ENCODE measurements at regions of chr6 and their contacts with region 1.

Region 1: GRCh38 chr6:11025921-11026635 is 18.0 kb downstream of the ELOVL2 start:
- DNase-seq: no peak
- H3K4me3 ChIP-seq: no peak overlapping the region
- H3K27ac ChIP-seq: no peak overlapping the region
- H3K4me1 ChIP-seq: no peaks in the 10 kb centered on the region
- H3K27me3 ChIP-seq: no peaks in the 10 kb centered on the region
- CTCF ChIP-seq: no peak
- POLR2A ChIP-seq: no peak

Region 2: DNA sequence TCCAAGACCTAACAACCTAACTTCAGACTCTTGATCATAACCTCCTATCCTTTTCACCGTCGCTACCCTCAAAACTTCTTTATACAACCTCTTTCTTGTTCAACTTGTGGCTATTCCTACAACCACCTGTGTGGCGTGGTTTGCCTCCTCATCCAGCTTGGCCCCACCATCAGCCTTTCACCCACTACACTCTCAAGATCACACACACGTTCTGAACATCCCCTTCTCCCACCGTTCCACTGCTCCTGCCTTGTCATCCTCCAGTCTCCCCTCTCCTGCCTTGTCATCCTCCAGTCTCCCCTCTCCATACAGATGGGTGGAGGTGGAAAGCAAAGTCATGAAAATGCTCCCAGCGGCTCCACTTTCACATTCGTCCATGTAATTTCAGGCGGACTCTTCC is 201.8 kb before region 1 on chr6:
- intact Hi-C with region 1: no loop called
- DNase-seq: no peak
- H3K4me3 ChIP-seq: no peak overlapping the region
- H3K27ac ChIP-seq: no peak overlapping the region
- H3K4me1 ChIP-seq: no peaks in the 10 kb centered on the region
- H3K27me3 ChIP-seq: no peaks in the 10 kb centered on the region
- CTCF ChIP-seq: no peak
- POLR2A ChIP-seq: no peak

Region 3: GRCh38 chr6:11042750-11043377 is 16.8 kb after region 1 on chr6:
- intact Hi-C with region 1: no loop called
- DNase-seq: no peak
- H3K4me3 ChIP-seq: peak overlapping the region in 1 of 3 donors; percentile 78
- H3K27ac ChIP-seq: no peak overlapping the region
- H3K4me1 ChIP-seq: no peaks in the 10 kb centered on the region
- H3K27me3 ChIP-seq: peaks cover 0 to 38% of the 10 kb centered on the region in 2 donors
- CTCF ChIP-seq: no peak
- POLR2A ChIP-seq: no peak

Region 4: DNA sequence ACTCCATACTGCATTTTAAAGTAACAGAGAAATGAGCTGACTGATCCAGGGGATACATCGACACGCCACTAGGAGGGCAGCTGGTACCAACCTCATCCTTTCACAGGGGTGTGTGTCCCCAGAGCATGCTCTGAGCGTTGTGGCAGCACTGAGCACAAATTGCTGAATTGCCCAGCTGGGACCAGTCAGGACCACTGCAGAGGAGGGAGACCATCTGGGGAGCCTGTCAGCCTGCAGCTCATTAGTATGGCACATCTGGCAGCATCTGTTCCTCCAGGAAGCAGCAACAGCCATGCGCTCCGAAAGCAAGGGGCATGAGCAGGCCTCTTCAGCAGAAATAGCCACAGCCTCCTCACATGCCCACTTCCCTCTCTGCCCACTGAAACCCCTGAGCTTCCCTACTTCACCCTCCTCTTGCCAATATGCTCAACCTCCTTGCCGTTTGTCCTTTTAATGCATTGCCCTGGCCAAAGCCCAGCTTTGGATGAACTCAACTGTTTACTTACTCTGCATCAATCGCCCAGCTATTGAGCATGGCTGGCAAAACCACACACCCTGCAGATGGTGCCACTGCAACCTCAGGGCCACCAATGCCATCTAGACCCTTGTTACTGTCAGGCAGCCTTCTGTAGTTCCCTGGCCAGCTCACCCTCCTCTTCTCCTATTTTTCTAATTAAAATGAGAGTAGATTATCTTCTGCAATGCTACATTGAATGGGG is 284.0 kb after region 1 on chr6:
- intact Hi-C with region 1: loop called (anchors 5 kb)
- DNase-seq: no peak
- H3K4me3 ChIP-seq: no peak overlapping the region
- H3K27ac ChIP-seq: no peak overlapping the region
- H3K4me1 ChIP-seq: no peaks in the 10 kb centered on the region
- H3K27me3 ChIP-seq: no peaks in the 10 kb centered on the region
- CTCF ChIP-seq: no peak
- POLR2A ChIP-seq: no peak